Sciatic nerve (tissue), 2 donors: ENCODE measurements at regions of chr14 and their contacts with region 1.

Region 1: GRCh38 chr14:22852940-22853767 is 16.8 kb downstream of the MMP14 start:
- DNase-seq: peak; percentile 97
- ATAC-seq: peak; percentile 40

Region 2: GRCh38 chr14:22589096-22589839 is 263.9 kb before region 1 on chr14 and contains the start of gene DAD1:
- intact Hi-C with region 1: loop called (anchors 10 kb)
- DNase-seq: peak; percentile 99
- ATAC-seq: peak; percentile 99
- total RNA-seq, gene DAD1: 163 TPM

Region 3: GRCh38 chr14:22822571-22823098 is 30.5 kb before region 1 on chr14:
- intact Hi-C with region 1: loop called (anchors 5 kb)
- DNase-seq: peak; percentile 91
- ATAC-seq: peak; percentile 91

Region 4: GRCh38 chr14:22835505-22835904 is 17.6 kb before region 1 on chr14:
- intact Hi-C with region 1: loop called (anchors 1 kb)
- DNase-seq: no peak
- ATAC-seq: no peak